ENCODE measurements at regions of chr6 and their contacts with region 1.

Region 1: DNA sequence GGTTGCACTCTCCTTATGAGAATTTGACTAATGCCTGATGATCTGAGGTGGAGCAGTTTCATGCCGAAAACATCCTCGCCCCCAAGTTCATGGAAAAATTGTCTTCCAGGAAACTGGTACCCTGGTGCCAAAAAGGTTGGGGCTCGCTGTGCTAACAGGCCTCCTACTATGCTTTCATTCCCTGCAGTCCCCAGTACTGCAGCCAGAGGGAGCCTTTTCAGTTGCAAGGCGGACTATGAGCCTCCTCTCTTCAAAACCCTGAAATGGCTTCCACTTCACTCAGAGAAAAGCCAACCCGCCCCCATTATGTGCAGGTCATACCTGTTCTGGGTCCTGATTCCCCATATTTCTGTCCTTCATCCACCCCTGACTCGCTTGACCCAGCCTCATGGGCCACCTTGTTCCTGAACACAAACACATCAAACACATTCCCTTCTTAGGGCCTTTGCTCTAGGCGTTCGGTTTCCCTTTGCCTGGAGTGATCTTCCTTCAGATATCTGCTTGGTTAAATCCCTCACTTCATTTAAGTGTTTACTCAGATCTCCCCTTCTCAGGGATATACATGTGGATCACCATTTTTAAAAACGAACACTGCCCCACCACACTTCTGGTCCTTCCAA is 173.7 kb downstream of the PHACTR1 start:
- DNase-seq: no peak
- ATAC-seq: no peak
- H3K4me3 ChIP-seq: no peak overlapping the region
- H3K27ac ChIP-seq: no peak overlapping the region
- H3K4me1 ChIP-seq: peaks cover 2% of the 10 kb centered on the region
- H3K27me3 ChIP-seq: no peaks in the 10 kb centered on the region

Region 2: DNA sequence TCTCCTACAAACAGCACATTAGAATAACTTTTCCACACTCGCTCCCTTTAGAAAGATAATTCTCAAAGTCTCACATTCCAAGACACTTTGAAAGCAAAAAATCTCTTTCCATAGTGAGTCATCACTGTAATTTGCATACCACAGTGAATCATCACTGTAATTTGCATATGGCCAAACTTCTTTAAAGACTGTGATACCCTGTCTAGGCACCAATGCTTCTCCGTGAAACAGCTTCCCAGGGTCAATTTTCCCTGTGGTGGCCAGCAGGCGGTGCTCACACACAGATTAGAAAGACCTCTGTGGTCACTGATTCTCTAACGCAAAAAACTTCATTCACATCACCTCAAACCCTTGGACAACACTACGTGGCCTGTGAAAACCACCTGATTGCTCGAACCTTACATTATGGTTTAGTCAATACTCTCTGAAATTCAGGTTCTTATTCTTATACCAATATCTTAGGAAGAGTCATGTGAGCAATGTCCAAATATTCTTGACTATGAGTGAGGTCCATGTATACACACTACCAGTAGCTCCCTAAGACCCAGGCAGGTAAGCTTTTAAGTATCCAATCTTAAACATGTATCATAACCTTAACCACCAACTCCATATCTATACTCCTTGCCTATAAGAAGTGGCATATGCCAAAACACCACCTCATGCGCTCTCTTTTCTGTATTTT is 252.2 kb before region 1 on chr6:
- intact Hi-C with region 1: loop called in 2 of 4 experiments (anchors 5 to 10 kb)
- DNase-seq: peak; percentile 15 to 70 (median 66)
- ATAC-seq: peak; percentile 57 to 66
- H3K4me3 ChIP-seq: no peak overlapping the region
- H3K27ac ChIP-seq: no peak overlapping the region
- H3K4me1 ChIP-seq: no peaks in the 10 kb centered on the region
- H3K27me3 ChIP-seq: no peaks in the 10 kb centered on the region

Region 3: DNA sequence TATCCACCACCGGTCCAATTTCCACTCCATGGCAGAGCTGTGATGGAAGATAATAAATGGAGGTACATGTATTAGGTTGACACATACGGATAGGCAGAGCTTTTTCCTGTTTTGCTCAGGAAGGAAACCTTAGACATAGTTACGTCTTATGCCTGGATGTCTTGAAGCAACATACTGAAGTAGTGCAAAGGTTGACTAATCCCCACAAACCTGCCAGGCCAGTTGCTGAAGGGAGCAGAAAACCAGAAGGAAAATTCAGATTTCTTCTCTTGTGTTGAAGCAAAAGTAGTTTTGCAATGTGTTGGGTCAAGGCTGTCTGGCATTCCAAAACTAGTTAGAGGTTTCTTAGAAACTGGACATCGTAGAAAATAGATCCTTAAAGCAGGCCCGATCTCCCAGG is 105.0 kb before region 1 on chr6:
- intact Hi-C with region 1: no loop called
- DNase-seq: no peak
- ATAC-seq: no peak
- H3K4me3 ChIP-seq: no peak overlapping the region
- H3K27ac ChIP-seq: no peak overlapping the region
- H3K4me1 ChIP-seq: no peaks in the 10 kb centered on the region
- H3K27me3 ChIP-seq: no peaks in the 10 kb centered on the region